Right cardiac atrium (tissue), 5 donors: ENCODE measurements at regions of chr7 and their contacts with region 1.

Region 1: DNA sequence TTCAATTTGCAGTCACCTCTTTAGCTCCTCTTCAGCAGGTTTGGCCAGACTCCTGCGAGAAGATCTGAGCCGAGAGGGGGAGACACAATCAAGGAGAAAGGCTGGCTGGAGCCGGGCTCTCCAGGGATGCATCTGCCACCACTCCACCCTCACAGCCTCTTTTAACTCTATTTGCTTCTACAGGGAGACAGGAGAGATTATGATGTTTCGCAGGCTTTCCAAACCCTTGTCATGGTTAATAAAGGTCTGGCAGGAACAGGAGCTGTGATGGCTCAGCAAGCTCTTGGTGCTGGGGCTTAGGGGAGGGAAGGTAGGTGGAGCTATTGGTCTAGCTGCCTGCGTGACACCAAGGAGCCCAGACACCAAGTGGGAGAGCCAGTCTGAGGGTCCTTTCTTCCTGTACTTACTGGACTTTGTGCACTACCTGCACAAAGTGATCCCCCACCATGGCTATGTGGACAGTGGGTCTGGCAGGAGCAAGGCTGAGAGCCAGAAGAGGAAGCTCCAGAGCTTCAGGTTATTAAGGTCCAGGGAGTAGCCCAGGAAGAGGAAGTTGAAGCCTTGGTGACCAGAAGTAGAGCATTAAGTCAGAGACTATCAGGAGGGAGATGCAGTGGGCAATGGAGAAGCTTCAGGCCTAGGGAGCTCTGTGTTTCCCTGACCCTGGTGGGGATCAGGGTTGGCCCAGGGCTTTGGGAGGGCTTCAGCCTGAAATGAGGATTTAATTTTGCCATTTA is 448.3 kb upstream of the PODXL start:
- DNase-seq: peak; percentile 25 to 66 (median 60)
- ATAC-seq: peak; percentile 80 to 81
- H3K4me3 ChIP-seq: no peak overlapping the region
- H3K27ac ChIP-seq: no peak overlapping the region
- H3K4me1 ChIP-seq: no peaks in the 10 kb centered on the region
- H3K27me3 ChIP-seq: no peaks in the 10 kb centered on the region

Region 2: GRCh38 chr7:132160611-132161532 is 156.2 kb after region 1 on chr7:
- intact Hi-C with region 1: loop called in 1 of 4 experiments (anchors 5 kb)
- DNase-seq: peak; percentile 75 to 84 (median 80)
- ATAC-seq: peak; percentile 48 to 64
- H3K4me3 ChIP-seq: no peak overlapping the region
- H3K27ac ChIP-seq: no peak overlapping the region
- H3K4me1 ChIP-seq: peaks cover 4% of the 10 kb centered on the region
- H3K27me3 ChIP-seq: no peaks in the 10 kb centered on the region